CD4-positive, alpha-beta T cell (primary cell): ENCODE measurements at regions of chr7 and their contacts with region 1.

Region 1: GRCh38 chr7:105487579-105488571 is 34.2 kb downstream of the PUS7 start:
- DNase-seq: peak in 4 of 14 experiments; percentile 1 to 54 (median 48)
- ATAC-seq: no peak
- H3K4me3 ChIP-seq: no peak overlapping the region
- H3K4me3 Mint-ChIP-seq: no peak overlapping the region
- H3K27ac ChIP-seq: no peak overlapping the region
- H3K27ac Mint-ChIP-seq: no peak overlapping the region
- H3K4me1 ChIP-seq: no peaks in the 10 kb centered on the region
- H3K4me1 Mint-ChIP-seq: peaks cover 4% of the 10 kb centered on the region
- H3K27me3 ChIP-seq: no peaks in the 10 kb centered on the region
- H3K27me3 Mint-ChIP-seq: no peaks in the 10 kb centered on the region
- CTCF ChIP-seq: peak; percentile 41

Region 2: DNA sequence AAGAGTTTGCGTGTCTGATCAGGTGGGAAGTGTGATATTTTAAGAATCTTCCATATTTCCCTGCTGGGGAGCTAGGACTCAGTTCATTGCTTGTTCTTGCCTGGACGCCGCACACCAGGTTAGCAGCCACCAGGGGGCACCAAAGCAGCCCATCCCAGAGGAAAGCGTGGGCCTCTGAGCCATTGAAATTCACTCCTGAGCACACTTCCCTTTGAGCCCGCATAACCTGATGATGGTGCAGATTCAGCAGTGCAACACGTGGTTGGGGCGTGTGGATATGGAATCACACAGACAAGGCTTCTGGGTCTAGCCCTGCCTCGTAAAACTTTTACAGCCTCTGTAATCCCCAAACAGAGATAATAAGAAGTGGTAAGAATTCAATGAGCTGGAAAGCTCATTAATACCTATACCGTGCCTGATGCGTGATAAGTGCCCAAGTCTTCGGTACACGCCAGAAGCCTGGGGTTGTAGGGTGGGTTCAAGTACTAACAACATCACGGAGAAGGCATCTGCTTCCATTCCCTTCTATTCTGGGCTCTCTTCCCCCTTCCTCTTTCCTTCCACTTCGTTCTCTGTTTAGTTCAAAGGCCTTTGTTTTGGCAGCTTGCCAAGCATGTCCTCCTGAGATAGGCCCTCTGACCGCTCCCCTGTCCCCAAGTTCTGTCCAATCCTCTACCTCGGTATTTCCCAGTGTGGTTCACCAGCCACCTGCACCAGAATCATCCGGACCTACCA is 604.0 kb before region 1 on chr7:
- CTCF ChIA-PET with region 1: no interaction called
- POLR2A ChIA-PET with region 1: no interaction called
- intact Hi-C with region 1: loop called in 1 of 2 experiments (anchors 5 kb)
- DNase-seq: peak; percentile 49 to 88 (median 70)
- ATAC-seq: peak; percentile 92
- H3K4me3 ChIP-seq: no peak overlapping the region
- H3K4me3 Mint-ChIP-seq: no peak overlapping the region
- H3K27ac ChIP-seq: no peak overlapping the region
- H3K27ac Mint-ChIP-seq: no peak overlapping the region
- H3K4me1 ChIP-seq: peaks cover 5% of the 10 kb centered on the region
- H3K4me1 Mint-ChIP-seq: peaks cover 10% of the 10 kb centered on the region
- H3K27me3 ChIP-seq: no peaks in the 10 kb centered on the region
- H3K27me3 Mint-ChIP-seq: no peaks in the 10 kb centered on the region
- CTCF ChIP-seq: peak; percentile 93

Region 3: DNA sequence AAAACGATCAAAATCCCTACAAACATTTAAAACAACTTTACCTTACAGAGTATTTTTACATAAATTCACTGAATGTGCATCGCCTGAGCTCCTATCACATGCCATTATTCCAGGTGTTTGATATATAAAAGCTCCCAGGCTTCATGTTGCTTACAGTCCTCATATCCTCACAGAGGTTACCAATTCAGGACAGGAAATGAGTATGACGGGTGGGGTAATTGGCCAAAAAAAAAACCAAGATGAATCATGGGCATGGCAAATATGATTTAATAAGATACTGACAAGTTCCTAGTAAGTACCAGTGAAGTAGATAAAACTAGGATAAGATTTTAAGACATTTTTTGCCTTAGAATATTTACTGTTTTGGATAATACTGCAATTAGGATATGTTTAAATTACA is 338.0 kb before region 1 on chr7:
- CTCF ChIA-PET with region 1: no interaction called
- POLR2A ChIA-PET with region 1: no interaction called
- intact Hi-C with region 1: loop called in 1 of 2 experiments (anchors 5 kb)
- DNase-seq: no peak
- ATAC-seq: no peak
- H3K4me3 ChIP-seq: no peak overlapping the region
- H3K4me3 Mint-ChIP-seq: no peak overlapping the region
- H3K27ac ChIP-seq: no peak overlapping the region
- H3K27ac Mint-ChIP-seq: no peak overlapping the region
- H3K4me1 ChIP-seq: no peaks in the 10 kb centered on the region
- H3K4me1 Mint-ChIP-seq: peaks cover 4% of the 10 kb centered on the region
- H3K27me3 ChIP-seq: no peaks in the 10 kb centered on the region
- H3K27me3 Mint-ChIP-seq: no peaks in the 10 kb centered on the region
- CTCF ChIP-seq: no peak

Region 4: GRCh38 chr7:105429746-105430612 is 57.9 kb before region 1 on chr7:
- CTCF ChIA-PET with region 1: no interaction called
- POLR2A ChIA-PET with region 1: no interaction called
- intact Hi-C with region 1: loop called (anchors 2 kb)
- DNase-seq: peak; percentile 23 to 78 (median 45)
- ATAC-seq: peak; percentile 76
- H3K4me3 ChIP-seq: no peak overlapping the region
- H3K4me3 Mint-ChIP-seq: no peak overlapping the region
- H3K27ac ChIP-seq: no peak overlapping the region
- H3K27ac Mint-ChIP-seq: no peak overlapping the region
- H3K4me1 ChIP-seq: peaks cover 3% of the 10 kb centered on the region
- H3K4me1 Mint-ChIP-seq: peaks cover 7% of the 10 kb centered on the region
- H3K27me3 ChIP-seq: no peaks in the 10 kb centered on the region
- H3K27me3 Mint-ChIP-seq: no peaks in the 10 kb centered on the region
- CTCF ChIP-seq: peak; percentile 72